Mammary epithelial cell (primary cell): ENCODE measurements at regions of chr15 and their contacts with region 1.

Region 1: GRCh38 chr15:67024314-67024997 is 40.9 kb upstream of the SMAD3 start:
- DNase-seq: peak; percentile 93
- H3K4me3 ChIP-seq: no peak overlapping the region
- H3K27ac ChIP-seq: peak overlapping the region; percentile 57
- H3K4me1 ChIP-seq: peaks cover 49% of the 10 kb centered on the region
- H3K27me3 ChIP-seq: no peaks in the 10 kb centered on the region
- CTCF ChIP-seq: no peak

Region 2: DNA sequence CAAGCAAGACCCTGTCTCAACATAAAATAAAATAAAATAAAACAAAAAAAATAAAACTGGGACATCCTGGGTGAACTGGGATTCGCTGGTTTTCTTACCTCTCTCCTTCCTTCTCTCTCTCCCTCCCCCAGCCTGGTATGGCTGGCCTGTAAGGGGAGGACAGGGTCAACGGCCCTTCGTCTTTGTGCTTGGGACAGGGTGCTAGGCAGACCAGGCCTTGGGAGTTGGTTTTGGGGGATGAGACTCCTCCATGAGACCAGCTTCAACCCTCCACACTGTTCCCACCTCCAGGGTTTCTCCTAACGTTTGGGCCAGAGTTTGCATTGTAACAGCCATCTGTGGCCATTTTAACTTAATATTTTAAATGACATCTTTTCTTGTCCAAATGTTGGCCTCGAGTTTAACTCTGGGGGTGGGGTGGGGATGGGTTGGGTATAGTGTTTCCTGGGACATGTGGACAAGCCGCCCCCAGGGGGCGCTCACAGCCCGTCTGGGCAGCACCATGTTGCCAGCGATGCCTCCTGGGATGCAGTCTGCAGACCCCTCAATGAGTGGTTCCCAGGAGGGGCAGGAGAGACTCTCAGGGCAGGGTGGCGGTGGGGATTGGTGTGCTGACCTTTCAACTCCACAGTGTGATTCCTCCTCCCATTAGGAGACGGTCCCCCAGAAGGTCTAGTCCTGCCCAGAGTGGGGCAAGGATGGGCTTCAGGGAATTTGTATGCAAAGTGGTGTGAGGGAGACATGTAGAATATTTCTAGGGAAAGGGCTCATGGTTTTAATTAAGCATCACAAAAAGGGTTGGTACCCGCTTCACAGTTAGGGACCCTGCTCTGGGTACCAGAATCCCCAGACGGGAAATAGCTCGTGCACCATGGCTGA is 420.9 kb before region 1 on chr15:
- CTCF ChIA-PET with region 1: no interaction called
- dilution Hi-C with region 1: no loop called
- in situ Hi-C with region 1: no loop called
- intact Hi-C with region 1: no loop called
- DNase-seq: peak; percentile 17
- H3K4me3 ChIP-seq: no peak overlapping the region
- H3K27ac ChIP-seq: no peak overlapping the region
- H3K4me1 ChIP-seq: no peaks in the 10 kb centered on the region
- H3K27me3 ChIP-seq: no peaks in the 10 kb centered on the region
- CTCF ChIP-seq: peak; percentile 51 to 85

Region 3: DNA sequence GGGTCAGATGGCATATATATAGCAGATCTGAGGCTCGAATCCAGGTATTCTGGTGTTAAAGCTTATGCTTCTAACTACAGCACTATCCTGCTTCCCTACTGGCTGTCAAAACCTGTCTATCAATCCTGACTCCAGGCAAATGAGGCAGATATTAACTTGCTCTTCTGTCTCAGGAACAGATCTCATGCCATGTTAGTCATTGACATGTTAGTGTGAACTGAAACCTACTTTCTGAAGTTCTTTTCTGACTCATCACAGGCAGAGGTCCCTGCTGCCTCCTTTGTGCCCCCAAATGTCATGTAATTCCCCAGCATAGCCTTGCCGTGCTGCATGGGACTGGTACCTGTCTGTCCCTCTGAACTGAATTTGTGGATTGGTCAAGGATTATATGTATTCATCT is 84.1 kb before region 1 on chr15:
- CTCF ChIA-PET with region 1: no interaction called
- dilution Hi-C with region 1: loop called (anchors 5 kb)
- in situ Hi-C with region 1: no loop called
- intact Hi-C with region 1: no loop called
- DNase-seq: peak; percentile 73
- H3K4me3 ChIP-seq: no peak overlapping the region
- H3K27ac ChIP-seq: no peak overlapping the region
- H3K4me1 ChIP-seq: peaks cover 3% of the 10 kb centered on the region
- H3K27me3 ChIP-seq: no peaks in the 10 kb centered on the region
- CTCF ChIP-seq: no peak

Region 4: GRCh38 chr15:66955871-66956585 is 68.4 kb before region 1 on chr15:
- CTCF ChIA-PET with region 1: no interaction called
- dilution Hi-C with region 1: no loop called
- in situ Hi-C with region 1: no loop called
- intact Hi-C with region 1: loop called (anchors 2 kb)
- DNase-seq: peak; percentile 94
- H3K4me3 ChIP-seq: no peak overlapping the region
- H3K27ac ChIP-seq: peak overlapping the region; percentile 73
- H3K4me1 ChIP-seq: peaks cover 24% of the 10 kb centered on the region
- H3K27me3 ChIP-seq: no peaks in the 10 kb centered on the region
- CTCF ChIP-seq: no peak

Region 5: GRCh38 chr15:67039384-67040075 is 15.1 kb after region 1 on chr15:
- CTCF ChIA-PET with region 1: interaction called, 14 read pairs
- dilution Hi-C with region 1: no loop called
- in situ Hi-C with region 1: no loop called
- intact Hi-C with region 1: loop called (anchors 1 kb)
- DNase-seq: peak; percentile 94
- H3K4me3 ChIP-seq: no peak overlapping the region
- H3K27ac ChIP-seq: no peak overlapping the region
- H3K4me1 ChIP-seq: peaks cover 23% of the 10 kb centered on the region
- H3K27me3 ChIP-seq: no peaks in the 10 kb centered on the region
- CTCF ChIP-seq: no peak

Region 6: GRCh38 chr15:67097930-67098740 is 73.7 kb after region 1 on chr15:
- CTCF ChIA-PET with region 1: no interaction called
- dilution Hi-C with region 1: loop called (anchors 5 kb)
- in situ Hi-C with region 1: no loop called
- intact Hi-C with region 1: no loop called
- DNase-seq: peak; percentile 67
- H3K4me3 ChIP-seq: no peak overlapping the region
- H3K27ac ChIP-seq: peak overlapping the region; percentile 52
- H3K4me1 ChIP-seq: peaks cover 43% of the 10 kb centered on the region
- H3K27me3 ChIP-seq: no peaks in the 10 kb centered on the region
- CTCF ChIP-seq: no peak